ENCODE measurements at regions of chr12 and their contacts with region 1.

Region 1: DNA sequence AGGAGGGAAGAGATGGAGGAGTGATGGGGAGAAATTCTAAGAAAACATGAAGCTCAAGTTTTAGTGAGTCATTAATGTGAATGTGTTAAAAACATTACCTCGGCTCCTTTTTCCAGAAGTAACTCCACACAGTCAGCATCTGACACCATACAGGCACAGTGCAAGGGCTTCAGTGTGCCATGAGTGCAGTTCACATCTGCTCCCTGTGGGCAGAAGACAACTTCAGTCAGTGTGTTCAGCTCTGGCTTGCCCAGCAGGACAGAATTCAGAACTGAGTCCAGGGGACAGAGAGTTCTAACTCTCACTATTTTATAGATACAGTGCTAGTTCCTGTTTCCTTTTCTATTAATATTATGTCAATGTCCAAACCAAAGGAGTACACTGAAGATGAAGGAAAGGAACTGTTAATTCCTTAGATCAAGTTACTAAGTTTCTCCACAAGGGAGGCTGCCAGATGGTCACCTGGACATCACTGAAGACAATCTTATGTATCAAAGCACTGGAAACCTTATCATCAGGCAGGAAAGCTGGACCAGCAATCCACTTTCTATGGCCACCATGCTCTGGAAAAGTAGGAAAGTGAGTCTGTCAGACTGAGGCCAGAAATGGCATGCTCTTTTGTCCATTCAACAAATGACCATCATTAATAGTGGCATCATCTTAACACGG is 6.1 kb downstream of the ASB8 start:
- DNase-seq: no peak
- ATAC-seq: peak in 3 of 8 donors; percentile 22 to 66 (median 43)
- H3K4me3 ChIP-seq: no peak overlapping the region
- H3K27ac ChIP-seq: peak overlapping the region in 9 of 10 donors; percentile 6 to 74 (median 51)
- H3K4me1 ChIP-seq: peaks cover 0 to 63% (median 44%) of the 10 kb centered on the region in 9 donors
- H3K27me3 ChIP-seq: no peaks in the 10 kb centered on the region
- CTCF ChIP-seq: no peak

Region 2: GRCh38 chr12:48119078-48119833 is 32.0 kb before region 1 on chr12 and contains the start of gene PFKM:
- intact Hi-C with region 1: loop called in 3 of 10 experiments (anchors 5 kb)
- DNase-seq: peak; percentile 67 to 91
- ATAC-seq: peak; percentile 95 to 98 (median 96)
- H3K4me3 ChIP-seq: peak within 1 kb of the TSS; percentile 53 to 83 (median 70)
- H3K27ac ChIP-seq: peak within 1 kb of the TSS; percentile 28 to 90 (median 84)
- H3K4me1 ChIP-seq: peaks cover 0 to 37% (median 9%) of the 10 kb centered on the region in 9 donors
- H3K27me3 ChIP-seq: no peaks in the 10 kb centered on the region
- CTCF ChIP-seq: no peak
- total RNA-seq, gene PFKM: 508 to 948 (median 694) TPM